OCI-LY7 (cell line): ENCODE measurements at regions of chr20 and their contacts with region 1.

Region 1: DNA sequence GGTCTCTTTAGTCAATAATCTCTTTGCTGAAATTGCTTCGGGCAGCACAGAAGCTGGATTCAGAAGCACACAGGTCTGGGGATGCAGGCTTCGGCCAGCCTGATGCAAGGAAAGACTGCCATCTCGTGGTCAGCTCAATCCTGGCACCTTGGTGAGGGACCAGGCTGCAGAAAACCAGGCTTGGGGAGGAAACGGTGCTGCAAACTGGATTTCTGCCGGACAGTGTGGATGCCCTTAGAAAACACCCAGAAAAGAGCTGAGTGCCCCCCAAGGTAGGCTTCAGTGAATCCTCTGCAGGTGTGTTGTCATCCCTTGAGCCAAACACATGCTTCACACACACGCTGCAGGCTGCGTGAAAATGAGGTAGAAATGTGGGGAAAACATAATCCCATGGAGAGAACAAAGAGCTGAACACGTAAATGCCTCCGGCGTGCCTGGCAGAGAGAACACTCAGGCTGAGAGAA is 89.8 kb upstream of the PAX1 start:
- DNase-seq: peak; percentile 71
- H3K4me3 ChIP-seq: no peak overlapping the region
- H3K27ac ChIP-seq: no peak overlapping the region
- H3K4me1 ChIP-seq: peaks cover 8% of the 10 kb centered on the region
- CTCF ChIP-seq: peak; percentile 94

Region 2: GRCh38 chr20:21529863-21530262 is 85.8 kb before region 1 on chr20:
- CTCF ChIA-PET with region 1: interaction called, 4 read pairs
- POLR2A ChIA-PET with region 1: no interaction called
- intact Hi-C with region 1: loop called (anchors 5 kb)
- DNase-seq: peak; percentile 48
- H3K4me3 ChIP-seq: no peak overlapping the region
- H3K27ac ChIP-seq: no peak overlapping the region
- H3K4me1 ChIP-seq: peaks cover 8% of the 10 kb centered on the region
- CTCF ChIP-seq: peak; percentile 82

Region 3: DNA sequence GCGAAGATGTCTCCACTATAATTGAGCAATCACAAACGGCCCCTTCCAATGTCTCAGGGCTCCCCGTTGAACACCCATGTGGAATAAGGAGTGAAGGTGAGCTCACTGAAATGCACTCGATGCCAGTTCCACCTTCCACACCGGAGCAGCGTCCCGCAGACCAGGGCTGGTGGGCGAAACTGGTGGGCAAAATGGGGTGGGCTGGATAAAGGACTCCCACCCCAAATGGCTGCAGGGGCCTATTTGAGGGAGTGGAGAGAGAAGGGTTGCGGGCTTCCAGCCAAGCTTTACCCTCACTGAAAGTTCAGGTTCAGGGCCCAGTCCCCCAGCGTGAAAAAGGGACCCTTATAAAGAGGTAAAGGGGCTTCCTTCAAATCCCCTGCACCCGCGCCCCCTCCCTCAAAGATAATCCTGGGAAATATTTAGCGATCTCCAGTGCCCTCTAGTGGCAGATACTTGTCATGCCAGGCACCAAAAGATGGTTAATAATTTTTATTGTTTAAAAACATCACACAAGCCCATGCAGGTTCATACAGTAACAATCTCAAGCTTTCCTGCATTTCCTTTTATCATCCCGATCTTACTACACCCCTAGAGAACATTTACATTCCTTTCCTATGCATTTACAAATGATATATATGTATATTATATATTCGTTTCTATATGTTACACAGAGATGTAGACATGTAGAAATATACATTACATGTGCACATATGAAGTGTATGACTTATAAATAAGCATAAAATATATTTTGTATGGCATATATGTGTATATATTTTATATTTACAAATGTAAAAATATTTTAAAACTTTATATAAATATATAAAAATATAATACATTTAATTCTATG is 43.6 kb before region 1 on chr20:
- CTCF ChIA-PET with region 1: no interaction called
- POLR2A ChIA-PET with region 1: interaction called, 4 read pairs
- intact Hi-C with region 1: loop called (anchors 5 kb)
- DNase-seq: peak; percentile 40
- H3K4me3 ChIP-seq: no peak overlapping the region
- H3K27ac ChIP-seq: no peak overlapping the region
- H3K4me1 ChIP-seq: peaks cover 3% of the 10 kb centered on the region
- CTCF ChIP-seq: peak; percentile 96

Region 4: DNA sequence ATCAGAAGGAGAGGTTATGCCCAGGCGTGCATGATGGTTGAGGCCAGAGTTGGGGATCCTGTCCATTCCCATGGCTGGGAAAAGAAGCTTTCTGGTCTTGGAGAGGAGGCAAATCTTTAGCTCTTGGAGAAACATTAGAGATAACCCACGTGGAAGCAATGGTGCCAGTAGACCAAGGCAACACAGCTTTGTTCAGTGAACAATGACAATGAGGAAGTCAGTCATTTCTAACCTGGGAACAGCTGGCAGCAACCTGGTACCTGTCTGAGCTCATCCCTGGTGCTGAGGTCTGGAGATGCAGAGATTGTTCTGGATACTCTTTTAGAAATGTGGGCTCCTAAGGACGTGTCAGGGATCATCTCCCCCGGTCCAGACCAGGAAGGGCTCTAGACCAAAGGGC is 13.2 kb after region 1 on chr20:
- CTCF ChIA-PET with region 1: no interaction called
- POLR2A ChIA-PET with region 1: interaction called, 11 read pairs
- intact Hi-C with region 1: no loop called
- DNase-seq: peak; percentile 58
- H3K4me3 ChIP-seq: peak overlapping the region; percentile 28
- H3K27ac ChIP-seq: peak overlapping the region; percentile 64
- H3K4me1 ChIP-seq: peaks cover 64% of the 10 kb centered on the region
- CTCF ChIP-seq: no peak